Heart right ventricle (tissue), 16 donors: ENCODE measurements at regions of chr2 and their contacts with region 1.

Region 1: GRCh38 chr2:101806123-101806522 is 108.6 kb downstream of the MAP4K4 start:
- DNase-seq: no peak
- ATAC-seq: peak in 5 of 8 donors; percentile 10 to 63 (median 55)
- H3K4me3 ChIP-seq: peak overlapping the region in 2 of 10 donors; percentile 4 to 19
- H3K27ac ChIP-seq: peak overlapping the region in 9 of 10 donors; percentile 28 to 75 (median 51)
- H3K4me1 ChIP-seq: peaks cover 17 to 96% (median 64%) of the 10 kb centered on the region in 9 donors
- H3K27me3 ChIP-seq: no peaks in the 10 kb centered on the region
- CTCF ChIP-seq: no peak

Region 2: DNA sequence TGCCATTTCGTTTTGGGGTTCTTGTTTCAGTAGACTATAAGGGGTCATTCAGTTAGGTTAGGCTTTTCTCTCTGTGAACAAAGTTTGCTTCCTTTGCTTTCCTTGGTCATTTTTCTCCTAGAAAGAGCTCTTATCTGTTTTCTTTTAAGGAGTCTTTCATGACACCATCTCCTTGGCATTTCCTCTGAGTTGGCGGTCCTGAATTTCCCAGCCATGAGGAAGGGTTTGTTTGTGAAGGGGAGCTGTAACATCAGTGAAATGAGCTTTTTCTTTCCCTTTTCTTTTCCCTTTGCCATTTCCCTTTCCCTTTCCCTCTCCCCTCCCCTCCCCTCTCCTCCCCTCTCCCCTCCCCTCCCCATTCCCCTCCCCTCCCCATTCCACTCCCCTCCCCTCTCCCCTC is 47.0 kb before region 1 on chr2:
- intact Hi-C with region 1: loop called in 1 of 10 experiments (anchors 5 kb)
- DNase-seq: peak in 1 of 2 donors; percentile 54
- ATAC-seq: peak in 7 of 8 donors; percentile 30 to 71 (median 53)
- H3K4me3 ChIP-seq: no peak overlapping the region
- H3K27ac ChIP-seq: peak overlapping the region in 5 of 10 donors; percentile 27 to 65 (median 49)
- H3K4me1 ChIP-seq: peaks cover 27 to 83% (median 75%) of the 10 kb centered on the region in 9 donors
- H3K27me3 ChIP-seq: no peaks in the 10 kb centered on the region
- CTCF ChIP-seq: no peak

Region 3: DNA sequence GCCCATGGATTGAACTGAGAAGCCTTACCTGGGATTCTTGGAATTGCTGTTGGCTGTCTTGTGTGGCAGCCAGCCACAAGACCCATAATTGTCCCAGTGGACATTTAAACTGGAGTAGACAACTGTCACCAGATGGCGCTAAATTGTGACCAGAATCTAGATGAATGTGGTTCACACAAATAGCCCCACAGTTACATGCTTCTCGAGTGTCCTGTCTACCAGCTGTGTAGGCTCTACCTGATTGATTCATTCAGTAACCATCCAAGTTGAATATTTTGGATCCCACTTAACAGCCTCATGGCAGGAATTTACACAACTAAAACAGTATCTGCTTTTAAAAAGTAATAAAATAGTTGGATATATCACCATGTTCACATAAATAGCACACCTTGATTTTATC is 35.4 kb before region 1 on chr2:
- intact Hi-C with region 1: loop called in 1 of 10 experiments (anchors 5 kb)
- DNase-seq: no peak
- ATAC-seq: peak in 3 of 8 donors; percentile 33 to 43 (median 38)
- H3K4me3 ChIP-seq: no peak overlapping the region
- H3K27ac ChIP-seq: peak overlapping the region in 5 of 10 donors; percentile 5 to 47 (median 22)
- H3K4me1 ChIP-seq: peaks cover 24 to 99% (median 92%) of the 10 kb centered on the region in 9 donors
- H3K27me3 ChIP-seq: no peaks in the 10 kb centered on the region
- CTCF ChIP-seq: peak in 6 of 9 donors; percentile 40 to 60 (median 46)